ENCODE measurements at regions of chr3 and their contacts with region 1.

Region 1: DNA sequence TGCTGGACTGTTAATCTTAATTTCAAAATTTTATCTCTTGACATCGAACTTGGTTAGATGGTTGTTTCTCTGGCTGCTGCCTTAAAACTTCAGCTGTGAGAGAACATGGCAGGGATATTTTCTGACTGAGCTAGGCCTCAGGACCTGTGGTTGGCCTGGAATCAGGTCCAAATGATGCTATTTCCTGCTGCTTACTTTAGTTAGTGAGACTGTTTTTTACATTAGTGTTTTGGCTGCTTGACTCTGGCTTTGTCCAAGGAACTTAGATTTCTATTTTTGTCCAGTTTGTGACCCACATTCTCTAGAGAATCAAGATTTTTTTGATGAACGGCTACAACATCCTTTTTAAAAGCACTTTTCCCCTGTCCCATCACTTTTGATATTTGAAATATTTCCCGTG is 497.9 kb upstream of the SGO1 start:
- DNase-seq: no peak
- H3K4me3 ChIP-seq: no peak overlapping the region
- H3K27ac ChIP-seq: no peak overlapping the region
- H3K4me1 ChIP-seq: no peaks in the 10 kb centered on the region
- H3K27me3 ChIP-seq: no peaks in the 10 kb centered on the region
- CTCF ChIP-seq: no peak

Region 2: GRCh38 chr3:20310629-20311028 is 373.3 kb before region 1 on chr3:
- CTCF ChIA-PET with region 1: no interaction called
- dilution Hi-C with region 1: no loop called
- in situ Hi-C with region 1: no loop called
- intact Hi-C with region 1: no loop called
- DNase-seq: no peak
- H3K4me3 ChIP-seq: no peak overlapping the region
- H3K27ac ChIP-seq: no peak overlapping the region
- H3K4me1 ChIP-seq: no peaks in the 10 kb centered on the region
- H3K27me3 ChIP-seq: no peaks in the 10 kb centered on the region
- CTCF ChIP-seq: no peak

Region 3: DNA sequence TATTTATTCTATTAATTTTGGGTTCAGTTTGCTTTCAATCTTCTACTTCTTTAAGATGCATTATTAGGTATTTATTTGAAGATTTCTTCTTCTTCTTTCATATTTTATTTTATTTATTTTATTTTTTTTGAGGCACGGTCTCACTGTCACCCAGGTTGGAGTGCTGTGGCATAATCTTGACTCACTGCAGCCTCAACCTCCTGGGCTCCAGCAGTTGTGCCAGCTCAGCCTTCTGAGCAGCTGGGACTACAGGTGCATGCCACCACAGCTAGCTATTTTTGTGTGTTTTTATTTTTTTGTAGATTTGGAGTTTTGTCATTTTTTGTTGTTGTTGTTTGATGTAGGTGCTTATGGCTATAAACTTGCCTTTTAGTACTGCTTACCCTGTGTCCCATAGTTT is 45.3 kb after region 1 on chr3:
- CTCF ChIA-PET with region 1: no interaction called
- dilution Hi-C with region 1: loop called (anchors 5 kb)
- in situ Hi-C with region 1: no loop called
- intact Hi-C with region 1: no loop called
- DNase-seq: no peak
- H3K4me3 ChIP-seq: no peak overlapping the region
- H3K27ac ChIP-seq: no peak overlapping the region
- H3K4me1 ChIP-seq: no peaks in the 10 kb centered on the region
- H3K27me3 ChIP-seq: no peaks in the 10 kb centered on the region
- CTCF ChIP-seq: no peak

Measured in mammary epithelial cell (primary cell).